ENCODE measurements at regions of chr2 and their contacts with region 1.

Region 1: DNA sequence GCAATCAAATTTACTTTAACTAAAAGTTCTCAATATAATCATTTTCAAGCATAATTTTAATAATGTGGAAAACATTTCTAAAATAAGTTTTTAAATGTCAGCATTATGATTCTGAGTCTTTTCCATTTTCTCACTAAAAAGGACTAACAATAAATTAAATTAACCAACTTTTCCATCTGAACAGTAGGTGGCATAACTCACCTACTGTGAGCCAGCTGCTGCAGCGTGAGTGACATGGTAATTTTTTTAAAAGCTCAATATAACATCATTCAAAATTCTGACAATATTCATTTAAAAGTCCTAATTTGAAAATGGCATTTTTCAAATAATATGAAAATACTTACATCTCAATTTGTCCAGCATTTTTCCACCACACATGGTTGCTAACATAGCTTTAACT is 66.5 kb downstream of the DTNB start:
- DNase-seq: peak in 3 of 9 experiments; percentile 8 to 60 (median 39)
- ATAC-seq: peak; percentile 55
- H3K4me3 ChIP-seq: no peak overlapping the region
- H3K4me3 Mint-ChIP-seq: no peak overlapping the region
- H3K27ac ChIP-seq: no peak overlapping the region
- H3K27ac Mint-ChIP-seq: no peak overlapping the region
- H3K4me1 ChIP-seq: no peaks in the 10 kb centered on the region
- H3K4me1 Mint-ChIP-seq: peaks cover 2% of the 10 kb centered on the region
- H3K27me3 ChIP-seq: no peaks in the 10 kb centered on the region
- H3K27me3 Mint-ChIP-seq: no peaks in the 10 kb centered on the region
- CTCF ChIP-seq: peak; percentile 72

Region 2: DNA sequence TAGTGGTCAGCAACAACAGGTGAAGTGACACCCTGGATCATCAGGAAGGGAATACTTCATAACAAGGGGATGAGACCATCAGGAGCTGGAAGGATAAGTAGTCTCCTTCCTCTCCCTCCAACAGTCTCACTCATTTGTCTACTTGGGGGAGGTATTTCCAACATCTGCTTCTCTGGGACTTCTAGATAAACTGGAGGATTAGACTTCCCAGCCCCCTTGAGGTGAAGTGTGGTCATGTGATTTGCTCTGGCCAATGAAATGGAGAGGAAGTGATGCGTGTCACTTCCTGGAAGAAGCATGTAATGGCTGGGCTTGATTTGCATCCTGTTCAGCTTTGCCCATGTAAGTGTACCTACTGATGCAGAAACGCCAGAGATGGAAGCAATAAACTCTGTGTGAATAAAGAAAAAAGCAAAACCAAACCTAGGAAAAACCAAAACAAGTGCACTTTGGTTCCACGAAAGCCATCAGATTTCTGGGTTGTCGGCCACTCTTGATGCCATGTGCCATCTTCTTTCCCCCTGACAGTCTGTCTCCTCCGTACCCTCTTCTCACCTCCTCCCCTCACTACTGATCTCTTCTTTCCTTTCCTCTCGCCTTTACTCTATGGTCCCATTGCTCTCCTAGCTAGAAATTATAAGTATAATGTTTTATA is 189.1 kb before region 1 on chr2:
- CTCF ChIA-PET with region 1: no interaction called
- POLR2A ChIA-PET with region 1: no interaction called
- intact Hi-C with region 1: no loop called
- DNase-seq: peak in 1 of 9 experiments; percentile 21
- ATAC-seq: no peak
- H3K4me3 ChIP-seq: no peak overlapping the region
- H3K4me3 Mint-ChIP-seq: no peak overlapping the region
- H3K27ac ChIP-seq: no peak overlapping the region
- H3K27ac Mint-ChIP-seq: peak overlapping the region; percentile 27
- H3K4me1 ChIP-seq: no peaks in the 10 kb centered on the region
- H3K4me1 Mint-ChIP-seq: no peaks in the 10 kb centered on the region
- H3K27me3 ChIP-seq: no peaks in the 10 kb centered on the region
- H3K27me3 Mint-ChIP-seq: no peaks in the 10 kb centered on the region
- CTCF ChIP-seq: no peak

Region 3: DNA sequence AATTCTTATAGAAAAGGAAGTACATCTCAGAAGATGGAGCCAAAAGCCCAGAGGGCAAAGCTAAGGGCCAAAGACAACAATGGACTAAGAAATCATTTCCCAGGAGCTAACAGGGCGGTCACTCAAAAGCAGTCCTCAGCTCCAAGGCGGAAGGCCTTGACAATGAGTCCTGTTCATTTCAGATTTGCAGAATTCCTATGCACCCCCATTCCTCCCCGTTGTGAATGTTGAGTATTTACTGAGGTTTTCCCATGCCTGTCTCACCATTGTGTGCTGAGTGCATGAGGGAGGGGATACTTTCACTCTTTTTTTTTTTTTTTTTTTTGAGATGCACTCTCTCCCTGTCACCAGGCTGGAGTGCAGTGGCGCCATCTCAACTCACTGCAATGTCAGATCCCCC is 85.3 kb after region 1 on chr2:
- CTCF ChIA-PET with region 1: interaction called, 163 read pairs
- POLR2A ChIA-PET with region 1: no interaction called
- intact Hi-C with region 1: no loop called
- DNase-seq: no peak
- ATAC-seq: no peak
- H3K4me3 ChIP-seq: no peak overlapping the region
- H3K4me3 Mint-ChIP-seq: no peak overlapping the region
- H3K27ac ChIP-seq: no peak overlapping the region
- H3K27ac Mint-ChIP-seq: no peak overlapping the region
- H3K4me1 ChIP-seq: no peaks in the 10 kb centered on the region
- H3K4me1 Mint-ChIP-seq: no peaks in the 10 kb centered on the region
- H3K27me3 ChIP-seq: no peaks in the 10 kb centered on the region
- H3K27me3 Mint-ChIP-seq: peaks cover 3% of the 10 kb centered on the region
- CTCF ChIP-seq: no peak

Region 4: DNA sequence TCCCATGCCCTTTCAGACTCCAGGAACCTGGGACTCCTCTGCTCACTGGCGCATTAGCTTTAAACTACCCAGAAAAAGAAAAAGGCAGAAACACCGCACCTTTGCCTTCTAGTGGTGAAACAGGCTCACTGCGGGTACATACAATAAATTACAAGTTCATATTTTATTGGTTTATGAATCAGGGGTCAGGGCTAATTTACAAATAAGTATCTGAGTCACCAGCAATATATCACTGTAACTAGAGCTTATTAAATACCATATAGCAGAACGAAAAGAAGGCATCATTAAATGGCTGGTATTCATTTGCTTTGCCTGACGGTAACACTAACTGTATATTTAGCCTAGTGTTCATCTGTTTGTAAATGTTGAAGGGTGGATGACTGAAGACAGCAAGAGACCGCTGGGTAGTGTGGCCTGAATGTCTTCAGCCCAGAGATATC is 93.3 kb after region 1 on chr2:
- CTCF ChIA-PET with region 1: interaction called, 163 read pairs
- POLR2A ChIA-PET with region 1: interaction called, 5 read pairs
- intact Hi-C with region 1: loop called in 1 of 2 experiments (anchors 1 kb)
- DNase-seq: peak in 5 of 9 experiments; percentile 7 to 52 (median 28)
- ATAC-seq: peak; percentile 69
- H3K4me3 ChIP-seq: no peak overlapping the region
- H3K4me3 Mint-ChIP-seq: no peak overlapping the region
- H3K27ac ChIP-seq: no peak overlapping the region
- H3K27ac Mint-ChIP-seq: no peak overlapping the region
- H3K4me1 ChIP-seq: no peaks in the 10 kb centered on the region
- H3K4me1 Mint-ChIP-seq: peaks cover 3% of the 10 kb centered on the region
- H3K27me3 ChIP-seq: no peaks in the 10 kb centered on the region
- H3K27me3 Mint-ChIP-seq: no peaks in the 10 kb centered on the region
- CTCF ChIP-seq: peak; percentile 76

Measured in CD8-positive, alpha-beta T cell (primary cell).